CD4-positive, alpha-beta T cell (primary cell): ENCODE measurements at regions of chr10 and their contacts with region 1.

Region 1: GRCh38 chr10:35259769-35260397 is 76.4 kb upstream of the CCNY start:
- DNase-seq: no peak
- ATAC-seq: no peak
- H3K4me3 ChIP-seq: no peak overlapping the region
- H3K4me3 Mint-ChIP-seq: no peak overlapping the region
- H3K27ac ChIP-seq: no peak overlapping the region
- H3K27ac Mint-ChIP-seq: no peak overlapping the region
- H3K4me1 ChIP-seq: no peaks in the 10 kb centered on the region
- H3K4me1 Mint-ChIP-seq: no peaks in the 10 kb centered on the region
- H3K27me3 ChIP-seq: peaks cover 0 to 2% of the 10 kb centered on the region in 2 experiments
- H3K27me3 Mint-ChIP-seq: peaks cover 4% of the 10 kb centered on the region
- CTCF ChIP-seq: no peak

Region 2: DNA sequence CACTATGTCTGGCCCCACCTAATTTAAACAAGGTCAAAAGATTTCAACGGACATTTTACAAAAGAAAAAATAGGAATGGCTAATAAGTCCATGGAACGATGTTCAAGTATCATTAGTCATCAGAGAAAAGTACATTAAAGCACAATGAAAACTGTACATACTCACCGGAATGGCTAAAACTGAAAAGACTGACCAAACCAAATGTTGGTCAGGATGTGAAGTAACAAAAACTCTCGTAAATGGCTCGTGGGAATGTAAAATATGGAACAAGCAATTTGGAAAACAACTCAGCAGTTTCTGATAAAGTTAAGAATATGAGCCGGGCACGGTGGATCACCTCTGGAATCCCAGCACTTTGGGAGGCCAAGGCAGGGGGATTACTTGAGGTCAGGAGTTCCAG is 379.1 kb before region 1 on chr10:
- CTCF ChIA-PET with region 1: no interaction called
- POLR2A ChIA-PET with region 1: no interaction called
- intact Hi-C with region 1: no loop called
- DNase-seq: no peak
- ATAC-seq: no peak
- H3K4me3 ChIP-seq: no peak overlapping the region
- H3K4me3 Mint-ChIP-seq: no peak overlapping the region
- H3K27ac ChIP-seq: no peak overlapping the region
- H3K27ac Mint-ChIP-seq: no peak overlapping the region
- H3K4me1 ChIP-seq: no peaks in the 10 kb centered on the region
- H3K4me1 Mint-ChIP-seq: no peaks in the 10 kb centered on the region
- H3K27me3 ChIP-seq: no peaks in the 10 kb centered on the region
- H3K27me3 Mint-ChIP-seq: no peaks in the 10 kb centered on the region
- CTCF ChIP-seq: no peak

Region 3: DNA sequence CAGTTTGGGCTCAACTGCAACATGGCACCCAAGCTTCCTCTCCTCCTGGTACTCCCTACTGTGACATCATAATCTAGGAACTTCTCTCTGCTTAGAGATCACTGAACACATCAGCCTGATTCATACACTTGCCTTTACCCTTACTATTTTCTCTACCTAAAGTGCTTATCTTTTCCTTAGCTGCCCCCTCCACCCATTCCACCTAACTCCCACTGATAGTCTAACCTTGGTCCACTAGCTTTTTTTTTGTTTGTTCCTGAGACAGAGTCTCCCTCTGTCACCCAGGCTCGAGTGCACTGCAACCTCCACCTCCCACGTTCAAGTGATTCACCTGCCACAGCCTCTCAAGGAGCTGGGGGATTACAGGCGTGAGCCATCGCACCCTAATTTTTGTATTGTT is 185.6 kb before region 1 on chr10:
- CTCF ChIA-PET with region 1: no interaction called
- POLR2A ChIA-PET with region 1: no interaction called
- intact Hi-C with region 1: no loop called
- DNase-seq: no peak
- ATAC-seq: no peak
- H3K4me3 ChIP-seq: no peak overlapping the region
- H3K4me3 Mint-ChIP-seq: no peak overlapping the region
- H3K27ac ChIP-seq: no peak overlapping the region
- H3K27ac Mint-ChIP-seq: no peak overlapping the region
- H3K4me1 ChIP-seq: no peaks in the 10 kb centered on the region
- H3K4me1 Mint-ChIP-seq: peaks cover 25% of the 10 kb centered on the region
- H3K27me3 ChIP-seq: no peaks in the 10 kb centered on the region
- H3K27me3 Mint-ChIP-seq: no peaks in the 10 kb centered on the region
- CTCF ChIP-seq: no peak

Region 4: DNA sequence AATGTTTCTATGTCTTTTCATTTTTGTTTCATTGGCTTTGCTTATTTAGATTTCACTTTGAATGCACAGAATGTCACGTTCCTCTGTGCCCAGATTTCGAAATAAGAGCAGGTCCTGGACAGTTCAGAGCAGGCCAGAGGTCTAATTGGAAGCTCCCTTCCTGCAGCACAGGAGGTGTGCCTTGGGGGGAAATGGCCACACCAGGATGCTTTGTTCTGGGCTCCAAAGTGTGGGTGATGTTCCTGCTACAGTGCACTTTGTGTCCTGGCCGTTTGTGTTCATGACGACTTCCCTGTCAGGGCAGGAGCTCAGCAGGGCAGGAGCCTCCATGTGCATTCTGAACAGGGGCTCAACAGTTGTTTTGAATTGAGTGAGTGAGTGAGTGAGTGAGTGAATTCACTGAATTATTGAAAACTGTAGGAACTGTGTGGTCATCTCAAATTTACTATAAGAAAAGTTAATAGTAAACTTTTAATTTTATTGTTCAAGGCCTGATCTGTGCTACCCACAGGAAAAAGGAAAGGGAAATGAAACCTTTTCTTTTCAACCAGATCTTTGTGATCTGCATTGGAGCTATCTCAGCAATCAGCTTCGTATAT is 235.7 kb after region 1 on chr10:
- CTCF ChIA-PET with region 1: no interaction called
- POLR2A ChIA-PET with region 1: no interaction called
- intact Hi-C with region 1: loop called in 1 of 2 experiments (anchors 10 kb)
- DNase-seq: peak in 1 of 14 experiments; percentile 13
- ATAC-seq: no peak
- H3K4me3 ChIP-seq: no peak overlapping the region
- H3K4me3 Mint-ChIP-seq: no peak overlapping the region
- H3K27ac ChIP-seq: no peak overlapping the region
- H3K27ac Mint-ChIP-seq: no peak overlapping the region
- H3K4me1 ChIP-seq: peaks cover 25% of the 10 kb centered on the region
- H3K4me1 Mint-ChIP-seq: peaks cover 74% of the 10 kb centered on the region
- H3K27me3 ChIP-seq: no peaks in the 10 kb centered on the region
- H3K27me3 Mint-ChIP-seq: no peaks in the 10 kb centered on the region
- CTCF ChIP-seq: no peak